ENCODE measurements at regions of chr17 and their contacts with region 1.

Region 1: DNA sequence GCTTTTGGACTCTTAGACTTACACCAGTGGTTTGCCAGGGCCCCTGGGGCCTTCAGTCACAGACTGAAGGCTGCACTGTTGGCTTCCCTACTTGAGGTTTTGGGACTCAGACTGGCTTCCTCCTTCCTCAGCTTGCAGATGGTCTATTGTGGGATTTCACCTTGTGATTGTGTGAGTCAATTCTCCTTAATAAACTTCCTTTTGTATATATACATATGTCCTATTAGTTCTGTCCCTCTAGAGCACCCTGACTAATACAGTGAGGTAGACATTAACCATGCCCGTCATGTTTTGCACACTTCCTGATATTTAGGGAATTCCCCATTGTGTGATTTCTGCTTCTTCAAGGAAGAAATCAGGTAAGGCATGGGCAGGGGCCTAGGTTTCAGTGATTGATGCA is 147.8 kb upstream of the CA10 start:
- DNase-seq: no peak
- ATAC-seq: no peak
- H3K4me3 ChIP-seq: no peak overlapping the region
- H3K27ac ChIP-seq: no peak overlapping the region
- H3K4me1 ChIP-seq: no peaks in the 10 kb centered on the region
- H3K27me3 ChIP-seq: no peaks in the 10 kb centered on the region
- CTCF ChIP-seq: no peak
- POLR2A ChIP-seq: no peak

Region 2: GRCh38 chr17:52287611-52288010 is 18.7 kb before region 1 on chr17:
- intact Hi-C with region 1: no loop called
- DNase-seq: no peak
- ATAC-seq: no peak
- H3K4me3 ChIP-seq: no peak overlapping the region
- H3K27ac ChIP-seq: no peak overlapping the region
- H3K4me1 ChIP-seq: no peaks in the 10 kb centered on the region
- H3K27me3 ChIP-seq: no peaks in the 10 kb centered on the region
- CTCF ChIP-seq: no peak
- POLR2A ChIP-seq: no peak

Region 3: DNA sequence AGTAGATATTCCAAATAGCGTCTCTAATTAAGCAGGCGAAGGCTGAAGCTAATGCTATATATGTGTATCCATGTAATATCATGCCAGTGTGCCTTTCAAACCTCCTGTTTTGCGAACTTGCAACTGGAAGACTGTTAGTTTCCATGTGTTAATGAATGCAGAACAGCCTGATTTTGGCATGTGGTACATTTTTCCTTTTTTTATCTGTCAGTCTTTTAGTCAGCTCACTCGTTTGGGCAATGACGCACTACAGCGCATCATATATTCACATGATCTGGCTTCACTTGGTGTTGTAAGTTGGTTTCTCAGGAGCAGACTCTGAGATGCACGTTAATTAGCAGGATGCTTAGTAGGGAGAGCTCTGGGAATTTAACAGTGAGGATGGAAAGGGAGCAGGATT is 62.6 kb after region 1 on chr17:
- intact Hi-C with region 1: loop called in 1 of 10 experiments (anchors 10 kb)
- DNase-seq: no peak
- ATAC-seq: no peak
- H3K4me3 ChIP-seq: no peak overlapping the region
- H3K27ac ChIP-seq: no peak overlapping the region
- H3K4me1 ChIP-seq: no peaks in the 10 kb centered on the region
- H3K27me3 ChIP-seq: no peaks in the 10 kb centered on the region
- CTCF ChIP-seq: no peak
- POLR2A ChIP-seq: no peak

Measured in heart left ventricle (tissue), 16 donors.